Left lung (tissue), 14 donors: ENCODE measurements at regions of chr1 and their contacts with region 1.

Region 1: DNA sequence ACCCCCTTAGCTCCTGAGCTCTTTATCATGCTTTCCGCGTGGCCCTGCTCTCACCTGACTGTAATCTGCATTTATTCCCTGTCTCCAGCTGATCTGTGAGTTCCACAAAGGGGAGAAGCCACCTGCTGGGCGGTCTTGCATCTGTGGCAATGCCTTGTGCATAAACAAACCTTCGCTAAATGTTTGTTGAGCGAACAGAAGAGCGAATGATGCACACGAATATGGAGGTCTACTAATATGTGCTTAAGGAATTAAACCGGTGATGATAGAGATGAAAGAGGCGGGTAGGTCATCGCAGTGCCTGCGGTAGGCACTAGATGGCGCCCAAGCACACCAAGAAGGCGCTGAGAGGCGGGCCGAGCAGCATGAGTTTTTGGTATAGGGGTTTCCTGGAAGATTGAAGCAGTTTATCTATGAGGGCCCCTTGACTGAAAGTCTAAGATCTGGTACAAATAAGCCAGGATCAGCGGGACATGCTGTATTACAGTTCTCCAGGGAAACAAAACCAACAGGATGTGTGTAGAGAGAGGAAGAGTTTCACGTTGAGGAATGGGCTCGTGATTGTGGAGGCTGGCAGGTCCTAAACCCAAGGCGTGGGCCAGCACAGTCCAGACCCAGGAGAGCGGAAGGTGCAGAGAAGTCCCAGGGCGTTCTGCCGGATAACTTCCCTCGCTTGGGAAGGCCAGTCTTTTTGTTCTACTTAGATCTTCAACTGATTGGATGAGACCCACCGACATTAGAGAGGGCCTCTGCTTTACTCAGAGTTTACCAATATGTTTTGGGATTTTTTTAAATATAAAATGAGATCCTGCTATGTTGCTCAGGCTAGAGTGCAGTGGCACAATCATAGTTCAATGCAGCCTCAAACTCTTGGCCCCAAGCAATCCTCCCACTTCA is 34.7 kb downstream of the TOMM20 start:
- DNase-seq: peak; percentile 50 to 92 (median 74)
- ATAC-seq: peak; percentile 95
- H3K4me3 ChIP-seq: no peak overlapping the region
- H3K27ac ChIP-seq: no peak overlapping the region
- H3K4me1 ChIP-seq: peaks cover 4 to 12% of the 10 kb centered on the region in 2 donors
- H3K27me3 ChIP-seq: no peaks in the 10 kb centered on the region
- CTCF ChIP-seq: peak; percentile 92

Region 2: DNA sequence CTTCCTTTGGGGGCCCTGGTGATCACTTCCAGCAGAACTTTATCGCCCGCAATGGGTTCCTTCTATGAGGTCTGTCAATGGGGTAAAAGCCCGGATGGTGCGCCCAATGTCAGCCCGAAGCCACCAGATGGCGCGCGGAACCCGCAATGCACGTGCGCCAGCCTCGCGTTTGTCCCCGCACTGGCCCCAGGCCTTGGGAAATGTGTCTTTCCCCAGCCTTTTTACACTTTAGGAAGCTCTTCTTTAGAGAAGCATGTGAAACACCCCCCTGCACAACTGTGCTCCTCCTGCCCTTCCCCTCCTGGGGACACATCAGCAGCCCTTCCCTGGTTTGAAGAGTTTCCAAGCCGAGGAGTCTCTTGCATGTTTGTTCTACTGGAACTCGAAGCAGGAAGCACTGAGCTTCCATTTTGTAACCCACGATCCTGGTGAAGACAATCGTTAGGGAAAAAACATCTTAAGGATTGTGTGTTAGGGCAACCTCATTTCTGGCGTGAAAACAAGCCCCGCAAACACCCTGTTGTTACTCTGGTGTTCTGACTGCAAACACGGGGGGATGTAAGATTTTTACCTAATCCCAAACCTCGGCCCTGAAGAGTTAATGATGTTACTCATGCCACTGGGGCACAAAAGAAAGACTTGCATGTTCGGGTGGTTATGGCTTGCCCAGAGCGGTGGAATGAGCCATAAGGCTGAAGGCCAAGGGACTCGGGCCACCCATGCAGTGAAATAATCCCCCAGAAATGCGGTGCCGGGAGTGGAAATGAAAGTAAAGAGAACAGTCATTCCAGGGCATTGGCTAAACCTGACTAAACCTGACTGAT is 594.6 kb before region 1 on chr1:
- intact Hi-C with region 1: loop called in 1 of 2 experiments (anchors 5 kb)
- DNase-seq: peak; percentile 87 to 98 (median 92)
- ATAC-seq: peak; percentile 97
- H3K4me3 ChIP-seq: no peak overlapping the region
- H3K27ac ChIP-seq: peak overlapping the region; percentile 82 to 90
- H3K4me1 ChIP-seq: peaks cover 13 to 22% of the 10 kb centered on the region in 2 donors
- H3K27me3 ChIP-seq: no peaks in the 10 kb centered on the region
- CTCF ChIP-seq: peak; percentile 84 to 95

Region 3: DNA sequence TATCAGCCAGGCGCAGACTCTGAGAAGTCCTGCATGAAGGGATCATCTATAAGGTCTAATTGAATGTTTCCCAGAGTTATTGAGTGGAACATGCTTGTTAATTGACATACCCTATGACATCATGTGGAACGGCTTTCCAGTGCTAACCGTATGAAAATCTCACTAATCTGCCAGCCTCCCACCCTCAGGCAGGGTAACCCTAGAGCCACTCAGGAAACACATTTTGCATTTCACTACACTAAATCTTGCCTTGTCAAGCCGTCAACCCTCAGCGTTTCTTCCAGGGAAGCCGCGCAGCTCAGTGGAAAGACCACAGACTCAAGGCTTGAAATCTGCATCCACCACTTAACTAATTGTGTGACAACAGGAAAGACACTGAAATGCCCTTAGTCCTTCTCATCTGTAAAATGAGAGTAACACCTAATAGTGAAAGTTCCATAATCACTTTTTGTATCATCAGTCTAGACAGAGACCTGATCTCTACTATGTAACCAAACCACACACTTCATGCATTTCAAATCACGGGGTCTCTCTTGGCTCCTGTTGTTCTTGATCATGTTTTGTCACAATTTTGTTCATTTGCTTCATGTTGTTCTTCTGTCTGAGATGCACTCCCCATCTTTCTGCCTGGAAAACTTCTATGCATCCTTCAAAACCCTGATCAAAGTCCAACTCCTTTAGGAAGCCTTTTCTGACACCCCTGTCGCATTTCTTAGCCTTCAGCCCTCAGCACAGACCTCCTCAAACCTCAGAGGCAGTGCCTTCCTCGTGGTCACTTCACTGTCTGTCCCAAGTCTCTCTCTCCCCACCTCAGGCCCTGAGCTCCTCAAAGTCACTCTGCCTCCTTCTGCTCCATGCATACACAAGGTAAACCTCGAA is 211.8 kb before region 1 on chr1:
- intact Hi-C with region 1: no loop called
- DNase-seq: no peak
- ATAC-seq: no peak
- H3K4me3 ChIP-seq: no peak overlapping the region
- H3K27ac ChIP-seq: no peak overlapping the region
- H3K4me1 ChIP-seq: peaks cover 3 to 21% of the 10 kb centered on the region in 2 donors
- H3K27me3 ChIP-seq: no peaks in the 10 kb centered on the region
- CTCF ChIP-seq: no peak

Region 4: DNA sequence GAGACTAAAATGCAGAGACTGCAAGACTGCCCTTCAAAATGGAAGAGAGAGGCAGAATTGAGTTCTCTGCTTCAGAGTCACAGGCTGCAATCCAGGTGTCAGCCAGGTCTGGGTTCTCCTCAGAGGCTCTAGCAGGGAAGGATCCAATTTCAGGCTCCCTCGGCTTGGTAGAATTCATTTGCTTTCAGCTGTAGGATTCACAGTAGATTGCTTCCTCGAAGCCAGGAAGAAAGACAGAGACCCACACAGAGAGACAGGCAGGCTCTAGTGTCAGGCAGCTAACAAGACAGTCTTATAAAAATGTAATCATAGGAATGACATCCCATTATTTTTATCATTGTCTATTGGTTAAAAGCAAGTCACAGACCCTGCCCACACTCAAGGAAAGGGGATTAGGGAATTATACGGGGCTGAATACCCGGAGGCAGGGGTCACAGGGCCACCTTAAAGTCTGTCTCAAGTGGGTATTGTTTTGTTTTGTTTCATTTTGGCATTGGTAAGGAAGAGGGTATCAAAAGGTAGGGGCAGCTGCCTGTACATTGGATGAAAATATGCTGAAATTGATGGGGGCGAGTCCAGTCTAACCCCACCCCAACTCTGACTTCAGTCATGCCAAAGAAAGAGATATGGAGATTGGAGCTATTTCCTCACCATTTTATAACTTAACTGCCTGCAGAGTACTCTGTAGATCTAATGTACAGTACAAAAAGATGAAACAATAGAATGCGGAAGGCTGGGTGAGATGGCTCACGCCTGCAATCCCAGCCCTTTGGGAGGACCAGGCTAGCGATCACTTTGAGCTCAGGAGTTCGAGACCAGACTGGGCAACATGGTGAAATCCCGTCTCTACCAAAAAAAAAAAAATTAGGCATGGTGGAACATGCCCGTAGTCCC is 263.8 kb after region 1 on chr1:
- intact Hi-C with region 1: no loop called
- DNase-seq: no peak
- ATAC-seq: no peak
- H3K4me3 ChIP-seq: no peak overlapping the region
- H3K27ac ChIP-seq: no peak overlapping the region
- H3K4me1 ChIP-seq: no peaks in the 10 kb centered on the region
- H3K27me3 ChIP-seq: no peaks in the 10 kb centered on the region
- CTCF ChIP-seq: no peak

Region 5: GRCh38 chr1:235415008-235415904 is 321.3 kb after region 1 on chr1:
- intact Hi-C with region 1: loop called in 1 of 2 experiments (anchors 10 kb)
- DNase-seq: peak in 3 of 4 donors; percentile 19 to 63 (median 62)
- ATAC-seq: peak; percentile 94
- H3K4me3 ChIP-seq: no peak overlapping the region
- H3K27ac ChIP-seq: no peak overlapping the region
- H3K4me1 ChIP-seq: no peaks in the 10 kb centered on the region
- H3K27me3 ChIP-seq: no peaks in the 10 kb centered on the region
- CTCF ChIP-seq: peak; percentile 70 to 84